ENCODE measurements at regions of chr15 and their contacts with region 1.

Region 1: GRCh38 chr15:33737687-33738601 is 230.4 kb upstream of the CHRM5 start:
- DNase-seq: no peak
- ATAC-seq: peak in 1 of 2 donors; percentile 51
- H3K4me3 ChIP-seq: no peak overlapping the region
- H3K27ac ChIP-seq: no peak overlapping the region
- H3K4me1 ChIP-seq: peaks cover 7 to 9% of the 10 kb centered on the region in 2 donors
- H3K27me3 ChIP-seq: no peaks in the 10 kb centered on the region
- CTCF ChIP-seq: peak in 4 of 5 experiments; percentile 33 to 70 (median 44)
- POLR2A ChIP-seq: no peak

Region 2: DNA sequence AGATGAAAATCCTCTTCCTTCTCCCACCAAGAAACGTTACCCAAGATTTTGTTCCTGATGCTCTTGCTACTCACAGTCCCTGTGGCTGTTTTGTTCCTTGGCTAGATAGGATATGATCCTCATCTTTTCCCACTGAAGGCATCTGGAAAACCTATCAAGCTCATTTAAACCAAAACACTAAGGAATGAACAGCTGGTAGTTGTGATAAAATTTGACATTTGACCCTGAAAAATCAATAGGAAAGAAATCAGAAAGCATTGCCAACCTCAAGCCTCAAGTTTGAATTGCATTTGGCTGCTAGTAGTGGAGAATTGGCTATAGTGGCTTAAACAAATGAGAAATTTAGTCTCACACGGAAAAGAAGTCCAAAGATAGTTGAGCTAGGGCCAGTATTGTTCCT is 59.7 kb after region 1 on chr15:
- in situ Hi-C with region 1: no loop called
- intact Hi-C with region 1: loop called (anchors 2 kb)
- DNase-seq: no peak
- ATAC-seq: no peak
- H3K4me3 ChIP-seq: no peak overlapping the region
- H3K27ac ChIP-seq: no peak overlapping the region
- H3K4me1 ChIP-seq: peaks cover 14 to 15% of the 10 kb centered on the region in 2 donors
- H3K27me3 ChIP-seq: no peaks in the 10 kb centered on the region
- CTCF ChIP-seq: no peak
- POLR2A ChIP-seq: no peak

Region 3: GRCh38 chr15:33963831-33964664 is 226.1 kb after region 1 on chr15:
- in situ Hi-C with region 1: no loop called
- intact Hi-C with region 1: loop called (anchors 10 kb)
- DNase-seq: no peak
- ATAC-seq: no peak
- H3K4me3 ChIP-seq: no peak overlapping the region
- H3K27ac ChIP-seq: no peak overlapping the region
- H3K4me1 ChIP-seq: peaks cover 10 to 15% of the 10 kb centered on the region in 2 donors
- H3K27me3 ChIP-seq: no peaks in the 10 kb centered on the region
- CTCF ChIP-seq: peak in 3 of 5 experiments; percentile 9 to 54 (median 26)
- POLR2A ChIP-seq: no peak

Measured in gastrocnemius medialis (tissue), 4 donors.